ENCODE measurements at regions of chr3 and their contacts with region 1.

Region 1: DNA sequence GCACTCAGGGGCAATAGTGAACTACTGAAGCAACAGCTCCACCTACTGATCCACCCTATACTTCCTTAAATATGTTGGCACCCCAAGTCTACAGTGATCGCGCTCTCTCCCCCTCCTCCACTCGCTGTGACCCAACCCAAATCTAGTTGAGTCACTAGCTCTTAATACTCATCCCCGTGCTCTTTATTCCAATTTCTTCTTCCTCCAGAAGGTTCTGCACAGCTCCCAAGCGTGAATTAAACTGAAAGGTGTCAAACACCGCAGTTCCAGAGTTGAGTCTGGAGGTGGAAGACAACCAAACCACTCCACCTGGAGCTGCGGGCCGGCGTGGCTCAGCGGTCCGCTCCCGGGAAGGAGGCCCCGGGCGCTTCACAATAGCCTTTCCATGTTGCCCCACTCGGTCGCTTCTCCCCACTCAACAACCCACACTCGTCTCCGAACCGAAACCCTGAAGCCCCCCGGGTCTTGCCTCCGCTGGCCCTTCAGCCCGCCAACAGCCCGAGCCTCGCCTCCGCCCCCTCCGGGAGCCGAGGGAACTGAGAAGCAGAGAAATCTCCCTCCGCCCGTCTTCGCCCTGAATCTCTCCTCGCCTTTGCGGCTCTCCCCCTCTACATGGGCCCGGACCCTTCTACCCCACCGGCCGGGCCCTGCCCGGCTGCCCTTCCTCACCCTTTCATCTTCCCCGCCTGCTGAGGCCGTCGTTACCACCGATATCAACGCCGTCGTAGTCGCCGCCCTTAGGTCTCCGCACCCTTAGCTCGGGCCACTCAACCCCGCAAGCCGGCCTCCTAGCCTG is 578 bp downstream of the NAA50 start:
- DNase-seq: peak; percentile 88
- ATAC-seq: peak; percentile 71
- H3K4me3 Mint-ChIP-seq: peak overlapping the region; percentile 93
- H3K27ac Mint-ChIP-seq: peak overlapping the region; percentile 100
- H3K4me1 Mint-ChIP-seq: peaks cover 66% of the 10 kb centered on the region
- H3K27me3 Mint-ChIP-seq: no peaks in the 10 kb centered on the region

Region 2: GRCh38 chr3:112676659-112677234 is 1068.7 kb before region 1 on chr3:
- CTCF ChIA-PET with region 1: no interaction called
- POLR2A ChIA-PET with region 1: no interaction called
- intact Hi-C with region 1: loop called in 1 of 2 experiments (anchors 2 kb)
- DNase-seq: peak; percentile 94
- ATAC-seq: peak; percentile 98
- H3K4me3 Mint-ChIP-seq: no peak overlapping the region
- H3K27ac Mint-ChIP-seq: peak overlapping the region; percentile 27
- H3K4me1 Mint-ChIP-seq: peaks cover 41% of the 10 kb centered on the region
- H3K27me3 Mint-ChIP-seq: peaks cover 19% of the 10 kb centered on the region

Region 3: DNA sequence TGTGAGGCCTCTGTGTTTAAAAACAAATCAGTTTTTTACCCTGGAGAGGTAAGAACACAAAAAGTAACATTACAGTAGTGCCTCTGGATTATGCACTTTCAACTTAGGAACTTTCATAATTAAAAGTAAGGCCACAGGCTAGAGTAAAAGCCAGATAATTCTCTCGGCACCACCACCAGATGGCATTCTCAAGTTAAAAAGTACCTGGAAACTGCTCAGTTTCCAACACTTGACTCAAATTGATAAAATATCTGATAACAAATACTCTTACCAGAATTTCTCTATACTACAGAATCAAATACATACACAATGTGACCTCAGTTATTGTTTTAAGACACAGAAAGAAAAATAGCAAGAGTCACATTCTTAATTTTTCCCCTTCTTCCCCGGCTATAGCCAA is 250.4 kb before region 1 on chr3:
- CTCF ChIA-PET with region 1: no interaction called
- POLR2A ChIA-PET with region 1: no interaction called
- intact Hi-C with region 1: loop called (anchors 1 to 2 kb)
- DNase-seq: peak; percentile 52
- ATAC-seq: peak; percentile 66
- H3K4me3 Mint-ChIP-seq: no peak overlapping the region
- H3K27ac Mint-ChIP-seq: no peak overlapping the region
- H3K4me1 Mint-ChIP-seq: no peaks in the 10 kb centered on the region
- H3K27me3 Mint-ChIP-seq: no peaks in the 10 kb centered on the region

Region 4: DNA sequence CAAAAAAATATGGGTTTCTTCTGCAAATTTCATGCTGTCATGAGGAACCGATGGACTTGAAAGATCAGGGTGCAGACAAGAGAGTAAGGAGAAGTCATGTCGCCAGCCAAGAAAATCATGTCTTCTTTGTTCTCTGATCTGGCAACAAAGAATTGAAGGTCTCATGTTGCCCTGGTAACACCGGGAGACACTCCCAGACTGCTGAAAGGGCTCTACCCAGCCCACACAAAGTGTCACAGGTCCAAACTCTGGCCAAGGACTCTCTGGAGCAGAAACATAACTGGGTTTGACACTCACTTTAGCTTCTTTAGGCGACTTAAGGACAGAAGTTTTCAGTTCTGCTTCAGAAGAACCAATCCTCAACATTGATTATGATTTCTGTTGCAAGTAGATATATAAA is 170.3 kb before region 1 on chr3:
- CTCF ChIA-PET with region 1: interaction called, 6 read pairs
- POLR2A ChIA-PET with region 1: no interaction called
- intact Hi-C with region 1: loop called in 1 of 2 experiments (anchors 1 kb)
- DNase-seq: no peak
- ATAC-seq: no peak
- H3K4me3 Mint-ChIP-seq: no peak overlapping the region
- H3K27ac Mint-ChIP-seq: no peak overlapping the region
- H3K4me1 Mint-ChIP-seq: peaks cover 8% of the 10 kb centered on the region
- H3K27me3 Mint-ChIP-seq: no peaks in the 10 kb centered on the region

Region 5: DNA sequence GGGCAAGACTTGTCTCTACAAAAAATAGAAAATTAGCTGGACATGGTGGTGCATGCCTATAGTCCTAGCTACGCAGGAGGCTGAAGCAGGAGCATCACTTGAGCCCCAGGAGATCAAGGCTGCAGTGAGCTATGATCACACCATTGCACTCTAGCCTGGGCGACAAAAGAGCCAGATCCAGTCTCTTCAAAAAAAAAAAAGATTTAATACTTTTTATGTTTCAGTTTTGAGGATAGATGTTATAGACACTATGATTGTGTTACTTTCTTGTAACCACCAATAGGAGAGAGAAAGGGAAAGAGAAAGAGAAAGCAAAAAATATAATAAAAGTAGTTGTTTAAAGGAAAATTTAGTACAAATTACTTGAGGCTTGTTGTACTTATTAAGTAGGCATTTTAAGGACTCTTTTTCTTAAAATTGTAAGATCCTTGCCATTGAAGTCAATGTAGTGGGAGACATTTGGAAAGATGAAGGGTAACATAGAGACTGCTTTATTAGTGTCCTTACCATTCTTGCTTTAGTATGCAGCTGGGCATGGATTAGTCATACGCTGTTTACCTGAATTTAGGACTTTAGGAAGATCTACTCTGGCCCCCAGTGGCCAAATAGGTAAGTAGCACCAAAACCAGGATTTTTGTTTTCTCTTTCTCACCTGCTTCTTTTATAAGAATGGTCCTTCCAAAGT is 167.2 kb after region 1 on chr3:
- CTCF ChIA-PET with region 1: interaction called, 3 read pairs
- POLR2A ChIA-PET with region 1: no interaction called
- intact Hi-C with region 1: loop called in 1 of 2 experiments (anchors 2 kb)
- DNase-seq: peak; percentile 47
- ATAC-seq: peak; percentile 91
- H3K4me3 Mint-ChIP-seq: peak overlapping the region; percentile 15
- H3K27ac Mint-ChIP-seq: no peak overlapping the region
- H3K4me1 Mint-ChIP-seq: peaks cover 5% of the 10 kb centered on the region
- H3K27me3 Mint-ChIP-seq: no peaks in the 10 kb centered on the region

Region 6: GRCh38 chr3:114213627-114214541 is 468.4 kb after region 1 on chr3:
- CTCF ChIA-PET with region 1: no interaction called
- POLR2A ChIA-PET with region 1: no interaction called
- intact Hi-C with region 1: loop called (anchors 1 to 5 kb)
- DNase-seq: peak; percentile 86
- ATAC-seq: peak; percentile 76
- H3K4me3 Mint-ChIP-seq: no peak overlapping the region
- H3K27ac Mint-ChIP-seq: no peak overlapping the region
- H3K4me1 Mint-ChIP-seq: peaks cover 17% of the 10 kb centered on the region
- H3K27me3 Mint-ChIP-seq: no peaks in the 10 kb centered on the region

Measured in activated CD4-positive, alpha-beta T cell treated with anti-CD3 and anti-CD28 coated beads for 36 hours (primary cell).